Pancreas (tissue), 10 donors: ENCODE measurements at regions of chr12 and their contacts with region 1.

Region 1: GRCh38 chr12:57213058-57213715 is 3.4 kb upstream of the NXPH4 start:
- DNase-seq: peak; percentile 80 to 94 (median 90)
- ATAC-seq: peak; percentile 84 to 92 (median 89)
- H3K4me3 ChIP-seq: no peak overlapping the region
- H3K27ac ChIP-seq: peak overlapping the region in 1 of 4 donors; percentile 33
- H3K4me1 ChIP-seq: peaks cover 0 to 15% (median 8%) of the 10 kb centered on the region in 3 donors
- H3K27me3 ChIP-seq: no peaks in the 10 kb centered on the region
- CTCF ChIP-seq: peak; percentile 89 to 95 (median 91)

Region 2: GRCh38 chr12:57242693-57243454 is 29.7 kb after region 1 on chr12:
- intact Hi-C with region 1: loop called in 2 of 3 experiments (anchors 2 to 5 kb)
- DNase-seq: peak; percentile 48 to 87 (median 75)
- ATAC-seq: peak; percentile 32 to 56 (median 54)
- H3K4me3 ChIP-seq: peak overlapping the region in 3 of 4 donors; percentile 11 to 54 (median 34)
- H3K27ac ChIP-seq: no peak overlapping the region
- H3K4me1 ChIP-seq: peaks cover 0 to 32% (median 3%) of the 10 kb centered on the region in 3 donors
- H3K27me3 ChIP-seq: peaks cover 0 to 4% (median 0%) of the 10 kb centered on the region in 4 donors
- CTCF ChIP-seq: peak in 2 of 4 donors; percentile 40 to 47

Region 3: GRCh38 chr12:57248934-57249742 is 36.0 kb after region 1 on chr12:
- intact Hi-C with region 1: loop called in 1 of 3 experiments (anchors 5 kb)
- DNase-seq: peak in 1 of 6 donors; percentile 25
- ATAC-seq: peak in 2 of 4 donors; percentile 17 to 64
- H3K4me3 ChIP-seq: no peak overlapping the region
- H3K27ac ChIP-seq: no peak overlapping the region
- H3K4me1 ChIP-seq: no peaks in the 10 kb centered on the region
- H3K27me3 ChIP-seq: no peaks in the 10 kb centered on the region
- CTCF ChIP-seq: no peak

Region 4: GRCh38 chr12:57459055-57459749 is 246.0 kb after region 1 on chr12:
- intact Hi-C with region 1: loop called in 1 of 3 experiments (anchors 10 kb)
- DNase-seq: peak; percentile 87 to 95 (median 94)
- ATAC-seq: peak; percentile 78 to 89 (median 86)
- H3K4me3 ChIP-seq: peak overlapping the region; percentile 34 to 70 (median 56)
- H3K27ac ChIP-seq: peak overlapping the region in 3 of 4 donors; percentile 37 to 69 (median 50)
- H3K4me1 ChIP-seq: peaks cover 0 to 12% (median 10%) of the 10 kb centered on the region in 3 donors
- H3K27me3 ChIP-seq: no peaks in the 10 kb centered on the region
- CTCF ChIP-seq: peak; percentile 92 to 93 (median 92)